Left ventricle myocardium superior (tissue), 1 donor: ENCODE measurements at regions of chrX and their contacts with region 1.

Region 1: GRCh38 chrX:16664074-16664473 is 14.1 kb downstream of the S100G start:
- DNase-seq: no peak
- ATAC-seq: peak; percentile 56

Region 2: GRCh38 chrX:16436348-16437188 is 227.5 kb before region 1 on chrX:
- intact Hi-C with region 1: loop called (anchors 2 kb)
- DNase-seq: peak; percentile 53
- ATAC-seq: peak; percentile 85